Caco-2 (cell line): ENCODE measurements at regions of chr6 and their contacts with region 1.

Region 1: DNA sequence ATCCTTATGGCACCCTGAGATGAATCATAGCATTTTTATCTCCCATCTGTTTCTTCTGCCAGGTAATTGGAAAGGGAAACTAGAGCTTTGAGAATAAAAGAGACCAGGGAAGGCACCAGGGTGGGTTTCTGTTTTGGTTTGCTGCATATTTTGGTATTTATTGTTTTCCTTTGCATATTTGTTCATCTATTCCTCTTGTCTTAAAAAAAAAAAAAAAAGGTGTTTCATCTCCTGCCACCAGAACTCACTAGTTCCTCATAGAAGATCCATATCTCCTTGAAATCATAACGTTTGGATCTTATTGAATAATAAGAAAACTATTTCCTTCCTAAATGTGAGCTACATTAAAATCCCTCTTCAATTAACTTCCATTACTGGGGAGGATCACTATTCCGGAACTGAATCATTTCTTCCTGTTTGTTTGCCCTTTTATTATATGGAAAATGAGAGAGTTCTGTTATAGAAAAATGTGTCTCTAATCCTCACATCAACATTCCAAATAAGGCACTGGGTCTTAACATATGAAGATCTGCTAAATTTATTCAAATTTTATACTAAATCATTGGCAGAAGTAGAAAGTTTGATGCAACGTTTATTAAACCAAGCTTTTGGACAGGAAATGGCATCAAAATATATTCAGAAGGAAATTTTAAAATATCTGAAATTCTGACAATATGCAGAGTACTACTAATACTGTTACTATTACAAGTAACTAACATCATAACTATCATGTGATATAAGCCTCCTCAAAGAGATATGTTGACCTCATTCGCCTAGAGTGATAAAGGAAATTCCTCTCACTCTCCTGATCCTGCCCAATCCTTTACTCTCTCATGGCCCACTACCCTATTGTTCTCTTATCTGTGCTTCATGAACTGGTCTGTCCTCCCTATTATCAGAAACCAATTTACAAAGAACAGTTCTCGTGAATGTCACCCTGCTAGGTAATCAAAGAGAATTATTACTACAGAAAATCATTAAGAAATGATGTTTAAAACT is 229.4 kb upstream of the RSPO3 start:
- DNase-seq: peak in 1 of 2 experiments; percentile 2
- H3K4me3 ChIP-seq: no peak overlapping the region
- H3K4me3 Mint-ChIP-seq: no peak overlapping the region
- H3K27ac Mint-ChIP-seq: peak overlapping the region; percentile 30
- H3K4me1 ChIP-seq: peaks cover 20% of the 10 kb centered on the region
- H3K4me1 Mint-ChIP-seq: peaks cover 17% of the 10 kb centered on the region
- H3K27me3 ChIP-seq: no peaks in the 10 kb centered on the region
- H3K27me3 Mint-ChIP-seq: no peaks in the 10 kb centered on the region
- CTCF ChIP-seq: no peak

Region 2: GRCh38 chr6:126581316-126581715 is 307.7 kb before region 1 on chr6:
- CTCF ChIA-PET with region 1: no interaction called
- POLR2A ChIA-PET with region 1: no interaction called
- intact Hi-C with region 1: no loop called
- DNase-seq: no peak
- H3K4me3 ChIP-seq: no peak overlapping the region
- H3K4me3 Mint-ChIP-seq: no peak overlapping the region
- H3K27ac Mint-ChIP-seq: no peak overlapping the region
- H3K4me1 ChIP-seq: no peaks in the 10 kb centered on the region
- H3K4me1 Mint-ChIP-seq: no peaks in the 10 kb centered on the region
- H3K27me3 ChIP-seq: no peaks in the 10 kb centered on the region
- H3K27me3 Mint-ChIP-seq: peaks cover 3% of the 10 kb centered on the region
- CTCF ChIP-seq: no peak

Region 3: GRCh38 chr6:126831461-126831860 is 57.6 kb before region 1 on chr6:
- CTCF ChIA-PET with region 1: no interaction called
- POLR2A ChIA-PET with region 1: no interaction called
- intact Hi-C with region 1: loop called (anchors 2 kb)
- DNase-seq: no peak
- H3K4me3 ChIP-seq: no peak overlapping the region
- H3K4me3 Mint-ChIP-seq: no peak overlapping the region
- H3K27ac Mint-ChIP-seq: no peak overlapping the region
- H3K4me1 ChIP-seq: no peaks in the 10 kb centered on the region
- H3K4me1 Mint-ChIP-seq: no peaks in the 10 kb centered on the region
- H3K27me3 ChIP-seq: no peaks in the 10 kb centered on the region
- H3K27me3 Mint-ChIP-seq: no peaks in the 10 kb centered on the region
- CTCF ChIP-seq: no peak